Aorta (tissue), 5 donors: ENCODE measurements at regions of chr3 and their contacts with region 1.

Region 1: GRCh38 chr3:113838631-113839209 is at the start of gene GRAMD1C:
- DNase-seq: peak; percentile 91 to 95
- ATAC-seq: peak; percentile 96
- H3K4me3 ChIP-seq: peak within 1 kb of the TSS; percentile 56 to 58
- H3K27ac ChIP-seq: no peak within 1 kb of the TSS
- H3K4me1 ChIP-seq: no peaks in the 10 kb centered on the region
- H3K27me3 ChIP-seq: no peaks in the 10 kb centered on the region
- total RNA-seq, gene GRAMD1C: 2.4 to 2.7 TPM

Region 2: DNA sequence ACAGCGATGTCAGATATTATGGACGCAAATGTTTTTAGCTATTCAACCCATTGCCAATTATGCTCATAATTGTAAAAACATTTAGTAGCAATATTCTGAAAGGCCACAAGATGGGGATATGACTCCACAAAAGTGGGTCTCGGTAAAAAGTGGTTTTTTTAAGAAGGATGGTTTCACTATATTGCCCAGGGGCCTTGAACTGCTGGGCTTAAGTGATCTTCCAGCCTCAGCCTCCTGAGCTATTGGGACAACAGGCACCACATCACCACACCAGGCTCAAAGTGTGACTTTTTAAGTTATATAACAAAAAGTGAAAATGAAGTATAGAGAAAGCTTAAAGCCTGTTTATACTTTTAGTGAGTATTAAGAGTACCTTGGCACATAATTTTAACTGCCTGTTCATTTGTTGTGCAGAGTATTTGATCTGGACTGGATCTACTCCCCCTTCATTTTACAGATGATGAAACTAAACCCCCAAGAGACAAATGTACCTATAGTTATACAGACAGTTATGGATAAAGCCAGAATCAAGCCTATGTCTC is 102.1 kb before region 1 on chr3:
- intact Hi-C with region 1: loop called (anchors 2 to 5 kb)
- DNase-seq: no peak
- ATAC-seq: peak; percentile 89
- H3K4me3 ChIP-seq: no peak overlapping the region
- H3K27ac ChIP-seq: no peak overlapping the region
- H3K4me1 ChIP-seq: no peaks in the 10 kb centered on the region
- H3K27me3 ChIP-seq: no peaks in the 10 kb centered on the region

Region 3: GRCh38 chr3:113912552-113913236 is 74.0 kb after region 1 on chr3:
- intact Hi-C with region 1: loop called in 1 of 2 experiments (anchors 5 kb)
- DNase-seq: no peak
- ATAC-seq: no peak
- H3K4me3 ChIP-seq: no peak overlapping the region
- H3K27ac ChIP-seq: no peak overlapping the region
- H3K4me1 ChIP-seq: no peaks in the 10 kb centered on the region
- H3K27me3 ChIP-seq: no peaks in the 10 kb centered on the region

Region 4: DNA sequence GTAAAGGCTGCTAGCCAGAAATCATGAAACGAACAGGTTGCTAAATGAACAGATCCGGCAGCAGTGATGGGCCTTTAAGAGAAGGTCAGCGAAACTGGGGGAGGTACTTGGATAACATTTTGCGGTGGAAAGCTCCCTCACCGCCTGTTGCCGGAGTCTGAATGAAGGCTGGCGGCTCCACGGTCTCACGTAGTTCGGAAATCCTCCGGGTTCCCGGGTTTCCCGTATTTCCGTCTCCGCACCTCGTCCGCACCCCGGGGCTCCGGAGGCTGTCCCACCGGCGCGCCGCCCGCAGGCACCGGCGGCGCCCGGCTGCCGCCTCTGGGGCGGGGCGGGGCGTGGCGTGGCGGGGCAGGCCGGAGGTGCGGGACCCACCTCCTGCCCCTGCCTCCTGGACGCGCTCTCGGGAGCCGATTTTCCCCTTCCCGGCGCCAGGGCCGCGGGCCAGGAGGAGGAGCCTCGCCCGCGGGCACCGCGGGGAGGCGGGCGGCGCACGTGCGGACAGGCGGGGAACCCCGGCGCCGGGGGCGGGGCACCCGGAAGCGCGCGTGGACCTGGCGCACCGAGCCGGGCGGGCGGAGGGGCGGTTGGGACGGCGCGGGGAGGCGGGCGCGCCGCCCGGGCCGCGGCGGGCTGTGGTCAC is 108.8 kb after region 1 on chr3 and contains the start of gene ZDHHC23:
- intact Hi-C with region 1: loop called in 1 of 2 experiments (anchors 5 kb)
- DNase-seq: peak; percentile 63 to 90
- ATAC-seq: peak; percentile 79
- H3K4me3 ChIP-seq: peak within 1 kb of the TSS; percentile 58 to 91
- H3K27ac ChIP-seq: peak within 1 kb of the TSS in 1 of 2 donors; percentile 21
- H3K4me1 ChIP-seq: no peaks in the 10 kb centered on the region
- H3K27me3 ChIP-seq: no peaks in the 10 kb centered on the region
- total RNA-seq, gene ZDHHC23: 4.1 to 12.7 TPM

Region 5: DNA sequence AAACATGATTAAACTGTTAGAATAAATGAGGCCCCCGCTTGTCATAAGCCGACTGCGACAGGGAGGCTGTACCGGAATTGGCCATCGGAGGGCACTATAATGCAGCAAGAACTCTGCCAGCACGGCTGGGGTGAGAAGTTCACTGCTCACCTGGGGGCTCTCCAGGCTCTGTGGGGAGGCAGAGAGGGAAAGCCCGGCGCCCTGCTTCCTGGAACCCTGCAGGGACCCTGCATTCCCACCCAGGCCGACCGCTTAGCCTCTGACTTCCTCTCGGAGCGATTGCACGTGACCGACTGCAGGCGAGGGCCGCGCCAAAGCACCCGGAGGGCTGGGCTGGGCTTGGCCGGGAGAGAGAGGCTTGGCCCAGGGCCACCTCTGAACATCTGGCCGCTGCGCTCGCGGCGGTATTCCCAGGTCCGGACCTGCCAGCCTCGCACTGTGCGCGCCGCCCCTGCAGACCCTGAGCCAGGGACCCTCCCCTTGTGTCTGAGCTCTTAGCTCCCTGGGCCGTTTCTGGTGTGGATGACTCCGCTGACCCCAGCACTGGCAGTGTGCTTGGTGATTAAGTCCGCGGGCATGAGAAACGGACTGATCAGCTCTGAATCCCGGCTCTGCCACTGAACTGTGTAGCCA is 313.9 kb after region 1 on chr3:
- intact Hi-C with region 1: loop called in 1 of 2 experiments (anchors 10 kb)
- DNase-seq: peak; percentile 87 to 91
- ATAC-seq: peak; percentile 91
- H3K4me3 ChIP-seq: peak overlapping the region; percentile 14 to 34
- H3K27ac ChIP-seq: no peak overlapping the region
- H3K4me1 ChIP-seq: peaks cover 0 to 3% of the 10 kb centered on the region in 2 donors
- H3K27me3 ChIP-seq: no peaks in the 10 kb centered on the region